ENCODE measurements at regions of chr9 and their contacts with region 1.

Region 1: GRCh38 chr9:129988607-129989361 is 54.2 kb downstream of the FNBP1 start:
- DNase-seq: peak; percentile 54
- ATAC-seq: peak; percentile 55
- H3K4me3 Mint-ChIP-seq: peak overlapping the region; percentile 15
- H3K27ac Mint-ChIP-seq: peak overlapping the region; percentile 84
- H3K4me1 Mint-ChIP-seq: peaks cover 86% of the 10 kb centered on the region
- H3K27me3 Mint-ChIP-seq: no peaks in the 10 kb centered on the region

Region 2: DNA sequence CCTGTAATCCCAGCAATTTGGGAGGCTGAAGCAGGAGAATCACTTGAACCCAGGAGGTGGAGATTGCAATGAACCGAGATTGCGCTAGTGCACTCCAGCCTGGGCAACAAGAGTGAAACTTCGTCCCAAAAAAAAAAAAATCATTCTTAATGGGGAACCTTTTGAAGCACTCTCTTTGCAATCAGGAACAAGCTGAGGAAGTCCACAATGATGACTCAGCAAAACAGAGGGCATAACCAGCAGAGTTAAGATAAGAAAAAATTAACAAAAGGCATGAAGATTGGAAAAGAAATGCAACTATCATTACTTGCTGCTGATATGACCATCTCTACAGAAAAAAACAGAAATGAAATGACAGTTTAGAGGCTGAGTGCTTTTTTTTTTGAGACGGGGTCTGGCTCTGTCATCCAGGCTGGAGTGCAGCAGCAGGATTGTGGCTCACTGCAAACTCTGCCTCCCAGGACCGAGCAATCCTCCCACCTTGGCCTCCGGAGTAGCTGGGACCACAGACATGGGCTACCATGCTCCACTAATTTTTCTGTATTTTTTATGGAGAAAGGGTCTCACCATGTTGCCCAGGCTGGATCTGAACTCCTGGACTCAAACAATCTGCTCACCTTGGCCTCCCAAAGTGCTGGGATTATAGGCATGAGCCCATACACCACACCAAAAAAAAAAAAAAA is 33.8 kb before region 1 on chr9:
- CTCF ChIA-PET with region 1: no interaction called
- POLR2A ChIA-PET with region 1: interaction called, 9 read pairs
- intact Hi-C with region 1: loop called (anchors 1 to 2 kb)
- DNase-seq: no peak
- ATAC-seq: no peak
- H3K4me3 Mint-ChIP-seq: no peak overlapping the region
- H3K27ac Mint-ChIP-seq: peak overlapping the region; percentile 66
- H3K4me1 Mint-ChIP-seq: peaks cover 61% of the 10 kb centered on the region
- H3K27me3 Mint-ChIP-seq: no peaks in the 10 kb centered on the region

Region 3: DNA sequence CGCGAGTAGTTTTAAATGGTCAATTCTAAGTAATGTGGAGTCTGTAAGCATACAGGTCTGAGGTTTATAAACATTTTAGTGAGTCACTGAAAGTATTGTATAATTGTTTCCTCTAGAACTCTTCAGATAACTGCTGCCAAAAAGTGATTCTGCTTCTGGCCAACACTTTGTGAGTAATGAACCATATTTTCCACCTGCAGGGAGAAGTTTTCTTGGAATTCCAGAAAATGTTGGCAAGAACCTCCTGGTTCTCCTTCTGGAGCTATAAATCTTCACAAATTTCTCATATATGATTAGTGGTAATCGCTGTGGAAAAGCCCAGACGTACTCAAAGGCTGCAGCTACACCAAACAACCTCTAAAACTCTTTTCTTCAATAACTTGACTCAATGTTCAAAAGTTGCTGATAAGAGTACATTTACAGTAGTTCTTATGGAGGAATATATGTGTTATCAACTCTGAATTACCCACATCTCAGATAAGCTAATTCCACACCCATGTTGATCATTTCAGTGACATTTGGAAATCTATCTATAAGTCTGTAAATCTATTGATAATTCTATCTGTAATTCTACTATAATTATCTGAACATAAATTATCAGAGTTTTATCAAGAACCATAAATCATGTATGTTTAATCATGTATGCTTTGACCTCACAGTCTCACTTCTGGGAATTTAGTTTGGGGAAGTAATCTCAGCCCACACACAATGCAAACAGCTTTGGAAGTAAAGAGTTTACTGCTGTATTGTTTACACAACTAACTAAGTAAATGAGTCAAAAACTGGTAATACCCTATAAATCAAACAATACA is 19.9 kb before region 1 on chr9:
- CTCF ChIA-PET with region 1: interaction called, 12 read pairs
- POLR2A ChIA-PET with region 1: interaction called, 3 read pairs
- intact Hi-C with region 1: loop called in 1 of 2 experiments (anchors 2 kb)
- DNase-seq: no peak
- ATAC-seq: peak; percentile 54
- H3K4me3 Mint-ChIP-seq: no peak overlapping the region
- H3K27ac Mint-ChIP-seq: peak overlapping the region; percentile 69
- H3K4me1 Mint-ChIP-seq: peaks cover 76% of the 10 kb centered on the region
- H3K27me3 Mint-ChIP-seq: no peaks in the 10 kb centered on the region

Region 4: DNA sequence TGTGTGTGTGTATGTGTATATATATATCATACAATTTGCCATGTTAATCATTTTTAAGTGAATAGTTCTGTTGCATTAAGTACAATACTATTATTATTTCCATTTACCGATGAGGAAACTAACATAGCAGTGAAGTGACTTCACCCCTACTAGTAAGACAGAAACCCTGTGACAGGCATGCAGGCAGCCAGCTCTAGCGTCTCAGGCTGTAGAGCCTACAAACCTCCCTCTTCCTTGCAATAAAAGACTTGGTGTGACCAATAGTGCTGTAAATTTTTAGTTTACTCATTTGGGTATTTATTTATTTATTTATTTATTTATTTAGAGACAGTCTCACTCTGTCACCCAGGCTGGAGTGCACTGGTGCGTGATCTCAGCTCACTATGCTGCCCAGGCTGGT is 29.5 kb after region 1 on chr9:
- CTCF ChIA-PET with region 1: interaction called, 10 read pairs
- POLR2A ChIA-PET with region 1: interaction called, 7 read pairs
- intact Hi-C with region 1: loop called (anchors 1 to 2 kb)
- DNase-seq: peak; percentile 61
- ATAC-seq: peak; percentile 27
- H3K4me3 Mint-ChIP-seq: no peak overlapping the region
- H3K27ac Mint-ChIP-seq: peak overlapping the region; percentile 96
- H3K4me1 Mint-ChIP-seq: peaks cover 86% of the 10 kb centered on the region
- H3K27me3 Mint-ChIP-seq: no peaks in the 10 kb centered on the region

Region 5: DNA sequence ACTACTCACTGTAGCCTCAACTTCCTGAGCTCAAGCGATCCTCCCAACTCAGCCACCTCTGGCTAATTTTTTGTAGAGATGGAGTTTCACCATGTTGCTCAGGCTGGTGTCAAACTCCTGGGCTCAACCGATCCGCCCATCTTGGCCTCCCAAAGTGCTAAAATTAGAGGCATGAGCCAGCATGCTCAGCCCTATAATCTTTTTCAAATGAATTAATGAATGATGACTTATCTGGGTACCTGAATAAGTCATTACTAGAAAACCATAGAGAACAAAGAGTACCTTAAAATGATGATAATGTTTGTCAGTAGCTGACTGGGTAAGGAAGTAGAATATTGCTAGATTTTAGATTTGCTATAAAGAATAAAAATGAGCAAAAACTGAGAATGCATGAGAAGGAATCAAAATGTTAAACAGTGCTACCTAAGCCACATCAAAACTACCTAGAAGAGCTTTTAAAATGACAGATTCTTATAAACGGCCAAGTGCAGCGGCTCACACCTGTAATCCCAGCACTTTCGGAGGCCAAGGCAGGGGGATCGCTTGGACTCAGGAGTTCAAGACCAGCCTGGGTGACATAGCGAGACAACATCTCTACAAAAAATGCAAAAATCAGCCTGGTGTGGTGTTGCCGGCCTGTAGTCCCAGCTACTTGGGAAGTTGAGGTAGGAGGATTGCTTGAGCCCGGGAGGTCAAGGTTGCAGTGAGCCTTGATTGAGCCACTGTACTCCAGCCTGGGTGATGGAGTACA is 40.6 kb after region 1 on chr9:
- CTCF ChIA-PET with region 1: interaction called, 4 read pairs
- POLR2A ChIA-PET with region 1: interaction called, 32 read pairs
- intact Hi-C with region 1: loop called in 1 of 2 experiments (anchors 1 kb)
- DNase-seq: peak; percentile 70
- ATAC-seq: peak; percentile 45
- H3K4me3 Mint-ChIP-seq: peak overlapping the region; percentile 44
- H3K27ac Mint-ChIP-seq: peak overlapping the region; percentile 92
- H3K4me1 Mint-ChIP-seq: peaks cover 98% of the 10 kb centered on the region
- H3K27me3 Mint-ChIP-seq: no peaks in the 10 kb centered on the region

Region 6: GRCh38 chr9:130390374-130390773 is 401.6 kb after region 1 on chr9:
- CTCF ChIA-PET with region 1: no interaction called
- POLR2A ChIA-PET with region 1: no interaction called
- intact Hi-C with region 1: no loop called
- DNase-seq: no peak
- ATAC-seq: no peak
- H3K4me3 Mint-ChIP-seq: no peak overlapping the region
- H3K27ac Mint-ChIP-seq: no peak overlapping the region
- H3K4me1 Mint-ChIP-seq: no peaks in the 10 kb centered on the region
- H3K27me3 Mint-ChIP-seq: no peaks in the 10 kb centered on the region